ENCODE measurements at regions of chr12 and their contacts with region 1.

Region 1: GRCh38 chr12:64669270-64669842 is 59.1 kb downstream of the RASSF3 start:
- DNase-seq: peak; percentile 67
- ATAC-seq: peak; percentile 85
- H3K4me3 Mint-ChIP-seq: peak overlapping the region; percentile 87
- H3K27ac Mint-ChIP-seq: peak overlapping the region; percentile 98
- H3K4me1 Mint-ChIP-seq: peaks cover 91% of the 10 kb centered on the region
- H3K27me3 Mint-ChIP-seq: no peaks in the 10 kb centered on the region

Region 2: GRCh38 chr12:64610149-64610678 is 59.1 kb before region 1 on chr12 and contains the start of gene RASSF3:
- CTCF ChIA-PET with region 1: interaction called, 12 read pairs
- POLR2A ChIA-PET with region 1: interaction called, 24 read pairs
- DNase-seq: peak; percentile 84
- ATAC-seq: peak; percentile 71
- H3K4me3 Mint-ChIP-seq: peak within 1 kb of the TSS; percentile 99
- H3K27ac Mint-ChIP-seq: peak within 1 kb of the TSS; percentile 96
- H3K4me1 Mint-ChIP-seq: peaks cover 36% of the 10 kb centered on the region
- H3K27me3 Mint-ChIP-seq: no peaks in the 10 kb centered on the region
- total RNA-seq, gene RASSF3: 61.7 to 63.7 TPM